Activated CD4-positive, alpha-beta memory T cell treated with anti-CD3 and anti-CD28 coated beads, Interleukin-2, amount 10 ng/mL, durations not matched to agents 7 days and 5 days (primary cell): ENCODE measurements at regions of chr6 and their contacts with region 1.

Region 1: GRCh38 chr6:112076200-112076599 is 11.1 kb downstream of the TUBE1 start:
- DNase-seq: no peak
- H3K4me3 Mint-ChIP-seq: no peak overlapping the region
- H3K27ac Mint-ChIP-seq: no peak overlapping the region
- H3K4me1 Mint-ChIP-seq: no peaks in the 10 kb centered on the region
- H3K27me3 Mint-ChIP-seq: no peaks in the 10 kb centered on the region

Region 2: DNA sequence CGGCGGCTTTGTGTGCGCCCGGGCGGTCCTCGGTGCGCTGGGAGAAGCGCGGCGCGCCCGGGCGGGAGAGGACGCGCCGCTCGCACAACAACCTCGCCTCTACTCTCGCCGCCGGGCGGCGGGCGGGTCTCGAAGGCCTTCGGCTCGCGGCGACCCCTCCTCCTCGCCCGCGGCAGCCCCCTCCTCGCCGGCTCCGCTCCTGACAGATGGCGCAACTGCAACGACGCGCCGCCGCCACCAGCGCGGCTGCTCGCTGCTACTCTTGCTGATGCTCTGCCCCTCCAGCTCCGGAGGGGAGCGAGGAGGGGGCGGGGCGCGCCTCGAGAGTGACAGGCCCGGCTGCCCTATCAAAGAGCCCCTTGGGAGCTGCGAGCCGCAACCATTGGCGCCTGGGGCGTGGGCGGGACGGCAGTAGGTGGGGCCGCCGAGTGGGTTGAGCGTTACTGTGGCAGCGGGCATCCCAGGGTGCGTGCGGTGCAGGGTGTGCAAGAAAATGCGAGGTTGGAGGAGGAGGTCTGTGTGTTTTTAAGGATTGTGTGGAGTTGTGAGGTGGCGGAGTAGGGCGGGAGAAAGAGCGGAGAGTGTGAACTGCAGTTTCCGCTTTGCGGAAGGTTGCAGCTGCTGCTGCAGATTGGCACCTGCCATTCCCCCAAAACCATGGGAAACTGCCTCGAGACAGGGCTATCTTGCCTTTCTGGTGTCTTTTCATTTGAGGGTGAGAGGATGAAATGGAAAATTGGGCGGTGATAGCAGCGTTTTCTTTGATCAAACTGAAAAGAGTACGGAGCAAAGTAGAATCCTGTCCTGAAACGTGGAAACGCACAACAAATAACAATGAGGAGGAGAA is 202.8 kb before region 1 on chr6 and contains the start of gene FYN:
- CTCF ChIA-PET with region 1: no interaction called
- POLR2A ChIA-PET with region 1: no interaction called
- DNase-seq: peak; percentile 99
- H3K4me3 Mint-ChIP-seq: peak within 1 kb of the TSS; percentile 96
- H3K27ac Mint-ChIP-seq: peak within 1 kb of the TSS; percentile 93
- H3K4me1 Mint-ChIP-seq: peaks cover 41% of the 10 kb centered on the region
- H3K27me3 Mint-ChIP-seq: no peaks in the 10 kb centered on the region
- total RNA-seq, gene FYN: 201 to 208 TPM

Region 3: DNA sequence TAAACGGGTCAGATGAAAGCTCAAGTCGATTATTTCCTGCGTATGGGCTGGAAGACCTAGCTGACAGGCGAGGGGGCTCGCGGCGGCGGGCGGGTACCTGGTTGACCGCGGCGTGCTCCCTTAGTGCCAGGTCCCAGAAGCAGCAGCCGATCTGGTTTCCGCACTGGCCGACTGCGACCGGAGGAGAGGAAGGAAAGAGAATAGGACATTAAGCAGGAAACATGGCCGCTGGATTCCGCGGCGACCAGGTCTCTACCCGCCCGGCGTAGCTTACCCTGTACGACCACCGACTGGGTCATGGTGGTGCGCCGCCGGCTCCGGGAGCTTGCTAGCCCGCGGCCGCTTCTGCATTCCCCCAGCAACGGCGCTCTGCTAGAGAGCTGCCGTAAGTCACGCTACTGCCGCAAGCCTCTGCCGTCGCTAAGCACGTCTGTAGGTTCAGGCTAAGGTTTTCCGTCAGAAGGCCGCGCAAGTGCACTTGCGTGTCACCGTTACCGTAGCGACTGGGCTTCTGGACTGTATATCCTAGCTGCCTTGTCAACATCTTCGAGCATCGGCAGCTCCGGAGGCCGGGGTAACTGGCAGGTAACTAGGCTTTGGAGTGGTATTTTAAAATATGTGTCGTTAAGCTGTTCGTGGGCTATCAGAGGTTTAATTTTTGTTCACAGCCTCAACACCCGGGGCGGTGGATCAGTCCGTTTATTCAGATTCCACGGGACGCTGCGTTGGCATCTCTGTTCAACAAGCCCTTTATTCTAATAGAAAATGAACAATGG is 11.1 kb after region 1 on chr6 and contains the starts of genes FAM229B and TUBE1:
- CTCF ChIA-PET with region 1: interaction called, 8 read pairs
- POLR2A ChIA-PET with region 1: interaction called, 12 read pairs
- DNase-seq: peak; percentile 92
- H3K4me3 Mint-ChIP-seq: no peak within 1 kb of the TSS
- H3K27ac Mint-ChIP-seq: no peak within 1 kb of the TSS
- H3K4me1 Mint-ChIP-seq: peaks cover 8% of the 10 kb centered on the region
- H3K27me3 Mint-ChIP-seq: peaks cover 33% of the 10 kb centered on the region
- total RNA-seq, gene FAM229B: 2.7 to 3.4 TPM
- total RNA-seq, gene TUBE1: 23.8 to 28.5 TPM

Region 4: GRCh38 chr6:112100561-112100960 is 24.4 kb after region 1 on chr6:
- CTCF ChIA-PET with region 1: no interaction called
- POLR2A ChIA-PET with region 1: no interaction called
- DNase-seq: no peak
- H3K4me3 Mint-ChIP-seq: no peak overlapping the region
- H3K27ac Mint-ChIP-seq: no peak overlapping the region
- H3K4me1 Mint-ChIP-seq: no peaks in the 10 kb centered on the region
- H3K27me3 Mint-ChIP-seq: peaks cover 22% of the 10 kb centered on the region